ENCODE measurements at regions of chr17 and their contacts with region 1.

Region 1: GRCh38 chr17:37373530-37374159 is 2.1 kb upstream of the C17orf78 start:
- DNase-seq: peak; percentile 85
- ATAC-seq: peak; percentile 98
- H3K4me3 Mint-ChIP-seq: no peak overlapping the region
- H3K27ac Mint-ChIP-seq: no peak overlapping the region
- H3K4me1 Mint-ChIP-seq: peaks cover 10% of the 10 kb centered on the region
- H3K27me3 Mint-ChIP-seq: peaks cover 2% of the 10 kb centered on the region

Region 2: GRCh38 chr17:37276527-37276926 is 97.1 kb before region 1 on chr17:
- CTCF ChIA-PET with region 1: no interaction called
- DNase-seq: no peak
- ATAC-seq: no peak
- H3K4me3 Mint-ChIP-seq: no peak overlapping the region
- H3K27ac Mint-ChIP-seq: no peak overlapping the region
- H3K4me1 Mint-ChIP-seq: peaks cover 2% of the 10 kb centered on the region
- H3K27me3 Mint-ChIP-seq: no peaks in the 10 kb centered on the region

Region 3: GRCh38 chr17:37358830-37359681 is 14.6 kb before region 1 on chr17:
- CTCF ChIA-PET with region 1: interaction called, 23 read pairs
- DNase-seq: peak; percentile 98
- ATAC-seq: peak; percentile 97
- H3K4me3 Mint-ChIP-seq: peak overlapping the region; percentile 96
- H3K27ac Mint-ChIP-seq: peak overlapping the region; percentile 88
- H3K4me1 Mint-ChIP-seq: peaks cover 25% of the 10 kb centered on the region
- H3K27me3 Mint-ChIP-seq: no peaks in the 10 kb centered on the region

Region 4: GRCh38 chr17:37384560-37385149 is 11.0 kb after region 1 on chr17:
- CTCF ChIA-PET with region 1: interaction called, 12 read pairs
- DNase-seq: no peak
- ATAC-seq: no peak
- H3K4me3 Mint-ChIP-seq: no peak overlapping the region
- H3K27ac Mint-ChIP-seq: no peak overlapping the region
- H3K4me1 Mint-ChIP-seq: no peaks in the 10 kb centered on the region
- H3K27me3 Mint-ChIP-seq: no peaks in the 10 kb centered on the region

Region 5: GRCh38 chr17:37392024-37392590 is 18.5 kb after region 1 on chr17:
- CTCF ChIA-PET with region 1: interaction called, 40 read pairs
- DNase-seq: no peak
- ATAC-seq: peak; percentile 66
- H3K4me3 Mint-ChIP-seq: no peak overlapping the region
- H3K27ac Mint-ChIP-seq: peak overlapping the region; percentile 52
- H3K4me1 Mint-ChIP-seq: peaks cover 22% of the 10 kb centered on the region
- H3K27me3 Mint-ChIP-seq: no peaks in the 10 kb centered on the region

Region 6: GRCh38 chr17:37399404-37399803 is 25.8 kb after region 1 on chr17:
- CTCF ChIA-PET with region 1: interaction called, 40 read pairs
- DNase-seq: no peak
- ATAC-seq: no peak
- H3K4me3 Mint-ChIP-seq: no peak overlapping the region
- H3K27ac Mint-ChIP-seq: no peak overlapping the region
- H3K4me1 Mint-ChIP-seq: peaks cover 25% of the 10 kb centered on the region
- H3K27me3 Mint-ChIP-seq: no peaks in the 10 kb centered on the region

Region 7: DNA sequence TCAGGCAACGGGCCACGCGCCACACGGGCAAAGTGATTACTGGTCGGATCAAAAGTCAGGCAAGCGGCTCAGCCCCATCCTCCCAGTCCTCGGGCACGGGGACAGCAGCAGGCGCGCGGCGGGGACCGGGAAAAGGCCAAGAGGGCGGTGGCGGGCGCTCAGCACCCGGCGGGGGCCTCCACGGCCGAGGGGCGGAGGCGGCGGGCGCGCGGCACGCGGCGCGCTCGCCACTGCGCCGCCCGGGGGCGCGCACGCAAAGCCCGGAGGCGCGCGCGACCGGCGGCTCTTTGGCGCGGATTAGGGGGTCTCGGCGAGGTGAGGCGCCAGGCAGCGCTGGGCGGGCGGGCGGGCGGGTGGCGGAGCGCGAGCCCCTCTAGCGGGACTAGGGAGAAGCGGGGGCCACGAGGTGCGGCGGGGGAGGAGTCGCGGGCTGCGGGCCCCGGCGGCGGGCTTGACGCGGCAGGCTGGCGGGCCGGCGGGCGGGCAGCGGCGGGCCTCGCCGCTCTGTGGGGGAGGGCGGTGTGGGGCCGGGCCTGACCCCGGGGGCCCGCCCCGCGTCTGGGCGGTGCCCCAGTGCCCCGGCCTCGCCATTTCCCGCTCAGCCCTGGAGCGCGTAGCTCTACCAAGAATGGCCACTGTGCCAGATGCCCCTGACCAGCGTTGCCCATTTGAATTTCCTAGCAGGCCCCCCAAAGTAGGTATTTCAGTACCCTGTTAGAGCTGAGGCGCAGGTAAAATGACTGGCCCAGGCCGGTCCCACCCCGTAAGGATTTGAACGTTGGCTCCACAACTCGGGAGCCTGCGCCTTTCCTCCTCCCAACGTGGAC is 33.2 kb after region 1 on chr17 and contains the starts of genes ACACA and TADA2A:
- CTCF ChIA-PET with region 1: interaction called, 16 read pairs
- DNase-seq: peak; percentile 85
- ATAC-seq: peak; percentile 96
- H3K4me3 Mint-ChIP-seq: peak within 1 kb of the TSS; percentile 97
- H3K27ac Mint-ChIP-seq: peak within 1 kb of the TSS; percentile 97
- H3K4me1 Mint-ChIP-seq: peaks cover 53% of the 10 kb centered on the region
- H3K27me3 Mint-ChIP-seq: no peaks in the 10 kb centered on the region
- total RNA-seq, gene ACACA: 55.4 to 69.7 TPM
- total RNA-seq, gene TADA2A: 42.2 to 50.4 TPM

Region 8: GRCh38 chr17:37546302-37546701 is 172.7 kb after region 1 on chr17:
- CTCF ChIA-PET with region 1: no interaction called
- DNase-seq: no peak
- ATAC-seq: no peak
- H3K4me3 Mint-ChIP-seq: no peak overlapping the region
- H3K27ac Mint-ChIP-seq: no peak overlapping the region
- H3K4me1 Mint-ChIP-seq: peaks cover 25% of the 10 kb centered on the region
- H3K27me3 Mint-ChIP-seq: no peaks in the 10 kb centered on the region

Region 9: DNA sequence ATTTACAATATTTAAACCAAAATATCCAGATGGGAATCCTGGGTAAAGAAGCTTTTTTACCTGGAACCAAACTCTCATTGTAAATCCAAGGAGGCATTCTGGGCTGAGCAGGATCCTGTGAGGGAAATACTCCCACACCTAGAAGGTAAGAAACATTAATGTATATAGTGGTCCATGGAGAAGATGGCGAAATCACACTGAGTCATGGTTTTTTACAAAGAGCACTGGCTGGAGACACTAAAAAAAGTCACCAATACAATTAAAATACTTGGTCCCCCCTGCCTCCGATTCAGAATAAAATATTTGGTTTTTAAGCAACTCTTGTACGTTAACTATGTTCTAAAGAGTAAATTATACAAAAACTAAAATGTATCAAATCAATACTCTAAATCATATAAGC is 202.6 kb after region 1 on chr17:
- CTCF ChIA-PET with region 1: no interaction called
- DNase-seq: no peak
- ATAC-seq: no peak
- H3K4me3 Mint-ChIP-seq: no peak overlapping the region
- H3K27ac Mint-ChIP-seq: no peak overlapping the region
- H3K4me1 Mint-ChIP-seq: no peaks in the 10 kb centered on the region
- H3K27me3 Mint-ChIP-seq: no peaks in the 10 kb centered on the region

Measured in activated CD8-positive, alpha-beta memory T cell treated with anti-CD3 and anti-CD28 coated beads, Interleukin-2, amount 10 ng/mL, durations not matched to agents 7 days and 5 days (primary cell).